ENCODE measurements at regions of chr4 and their contacts with region 1.

Region 1: DNA sequence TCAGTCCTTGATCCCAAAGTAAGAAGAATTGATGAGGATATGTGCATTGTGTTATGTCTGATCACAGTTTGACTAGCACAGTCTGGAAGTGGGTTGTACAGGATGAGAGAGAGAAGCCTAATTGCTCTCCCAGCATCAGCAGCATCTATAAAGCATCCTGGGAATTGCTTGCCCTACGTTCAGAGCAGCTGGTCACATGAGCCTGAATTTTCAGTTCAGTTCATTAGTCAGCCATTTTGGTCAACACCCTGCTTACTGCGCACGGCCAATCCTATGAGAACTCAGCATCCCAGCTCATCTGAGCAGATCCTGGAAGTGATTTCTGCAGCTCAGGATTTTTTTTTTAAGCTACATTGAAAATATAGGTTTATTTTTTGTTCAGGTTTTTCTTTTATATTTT is at the start of gene RUFY3:
- DNase-seq: peak; percentile 56 to 95 (median 72)

Region 2: DNA sequence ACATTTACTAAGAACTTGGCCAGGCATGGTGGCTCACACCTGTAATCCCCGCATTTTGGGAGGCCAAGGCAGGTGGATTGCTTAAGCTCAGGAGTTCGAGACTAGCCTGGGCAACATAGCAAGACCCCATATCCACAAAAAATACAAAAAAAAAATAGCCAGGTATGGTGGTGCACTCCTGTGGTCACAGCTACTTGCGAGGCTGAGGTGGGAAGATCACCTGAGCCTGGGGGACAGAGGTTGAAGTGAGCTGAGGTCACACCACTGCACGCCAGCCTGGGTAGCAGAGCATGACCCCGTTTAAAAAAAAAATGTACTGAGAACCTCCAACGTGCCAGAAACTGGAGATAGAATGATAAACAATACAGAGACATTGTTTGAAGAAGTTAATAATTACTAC is 316.0 kb before region 1 on chr4:
- intact Hi-C with region 1: no loop called
- DNase-seq: no peak

Region 3: GRCh38 chr4:70704331-70705145 is 17.2 kb before region 1 on chr4:
- intact Hi-C with region 1: loop called (anchors 2 kb)
- DNase-seq: peak; percentile 43 to 95 (median 68)

Region 4: GRCh38 chr4:70885174-70885573 is 163.4 kb after region 1 on chr4:
- intact Hi-C with region 1: no loop called
- DNase-seq: no peak

Region 5: DNA sequence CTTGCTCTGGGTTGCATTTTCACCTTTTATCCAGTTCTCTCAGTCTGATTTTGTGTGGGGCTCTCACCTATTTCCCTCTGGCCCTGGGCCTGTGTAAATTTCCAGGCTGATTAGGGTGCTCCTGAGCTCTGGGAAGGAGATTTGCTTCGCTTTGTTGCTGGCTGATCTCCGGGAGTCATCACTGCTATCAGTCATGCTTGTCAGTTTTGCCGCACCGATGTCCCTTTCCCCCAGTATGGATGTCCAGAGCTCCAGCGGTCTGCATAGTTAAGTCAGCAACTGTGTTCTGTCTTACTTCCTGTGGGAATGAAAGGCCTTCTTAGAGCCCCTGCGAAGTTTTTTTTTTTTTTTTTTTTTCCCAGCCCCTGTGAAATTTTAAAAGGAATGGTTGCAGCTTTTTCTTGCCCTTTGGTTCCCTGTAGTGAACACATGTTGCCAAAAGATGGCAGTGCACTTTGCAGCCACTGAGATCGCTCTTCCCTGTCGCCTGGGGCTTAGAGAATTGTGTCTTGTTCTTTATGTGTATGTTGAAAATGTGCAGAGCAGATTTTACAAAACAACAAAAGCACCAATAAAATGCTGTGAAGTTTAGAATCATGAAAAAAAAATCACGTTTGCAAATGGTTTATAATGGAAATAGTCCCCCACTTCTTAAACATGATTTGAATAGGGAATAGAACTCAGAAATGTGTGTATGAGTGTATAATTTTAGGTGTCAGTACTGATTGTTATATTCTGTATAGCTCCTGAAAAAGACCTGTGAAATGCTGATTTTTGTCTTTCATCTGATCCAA is 507.9 kb after region 1 on chr4:
- intact Hi-C with region 1: no loop called
- DNase-seq: peak in 6 of 10 donors; percentile 27 to 92 (median 53)